PC-9 (cell line): ENCODE measurements at regions of chr12 and their contacts with region 1.

Region 1: GRCh38 chr12:62603061-62603810 is 136.6 kb downstream of the MON2 start:
- DNase-seq: peak; percentile 79 to 82
- H3K4me3 ChIP-seq: peak overlapping the region; percentile 92
- H3K27ac ChIP-seq: peak overlapping the region; percentile 99
- H3K4me1 ChIP-seq: peaks cover 37% of the 10 kb centered on the region
- H3K27me3 ChIP-seq: no peaks in the 10 kb centered on the region
- CTCF ChIP-seq: peak; percentile 34; the same call in 1 of the 2 replicates

Region 2: DNA sequence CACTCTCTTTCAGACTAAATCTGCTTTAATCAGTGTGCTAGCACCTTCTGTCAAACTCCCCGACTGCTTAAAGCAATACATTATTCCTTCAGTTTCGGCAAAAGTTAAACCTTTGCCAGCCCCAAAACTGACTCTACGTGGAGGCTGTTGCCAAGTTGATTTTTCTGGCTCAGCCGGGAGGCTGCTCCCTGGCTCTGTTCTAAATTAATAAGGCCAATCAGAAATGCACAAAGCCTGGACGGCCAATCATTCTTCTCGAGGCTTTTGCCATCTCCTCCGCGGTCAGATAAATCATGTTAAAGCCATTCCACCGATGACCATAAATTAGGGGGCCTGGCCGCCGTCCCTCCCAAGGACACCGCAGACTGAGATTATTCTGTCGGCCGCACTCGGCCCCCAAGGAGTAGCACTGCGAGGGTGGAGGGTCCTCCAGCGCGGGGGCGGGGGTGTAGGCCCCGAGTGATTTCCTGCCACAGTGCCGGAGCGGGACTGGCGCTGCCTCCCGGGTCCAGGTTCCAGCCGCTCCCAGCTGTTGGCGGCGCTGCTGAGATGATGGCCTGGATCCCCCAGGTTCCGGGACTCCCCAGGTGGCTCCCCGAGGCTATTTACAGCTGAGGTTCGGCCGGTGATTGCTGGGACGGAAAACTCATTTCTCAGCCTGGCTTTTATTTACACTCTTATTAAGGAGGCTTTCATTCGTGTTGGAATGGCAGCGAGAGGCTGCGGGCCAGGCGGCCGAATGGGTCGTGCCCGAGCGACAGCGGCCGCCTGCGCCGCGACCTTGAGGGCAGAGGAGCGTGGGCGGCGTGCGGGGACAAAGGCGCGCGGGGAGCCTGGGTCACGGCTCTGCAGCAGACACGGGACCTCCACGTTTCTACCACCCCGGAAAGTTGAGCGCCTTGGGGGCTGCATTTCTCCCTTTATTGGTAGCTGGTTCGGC is 28.5 kb after region 1 on chr12:
- CTCF ChIA-PET with region 1: interaction called, 7 read pairs
- POLR2A ChIA-PET with region 1: no interaction called
- intact Hi-C with region 1: loop called (anchors 2 kb)
- DNase-seq: peak; percentile 57 to 66
- H3K4me3 ChIP-seq: peak overlapping the region; percentile 61
- H3K27ac ChIP-seq: peak overlapping the region; percentile 64
- H3K4me1 ChIP-seq: 0 out of 2 replicates have a peak, but pooled peaks cover 8% of the 10 kb centered on the region
- H3K27me3 ChIP-seq: no peaks in the 10 kb centered on the region
- CTCF ChIP-seq: no peak

Region 3: DNA sequence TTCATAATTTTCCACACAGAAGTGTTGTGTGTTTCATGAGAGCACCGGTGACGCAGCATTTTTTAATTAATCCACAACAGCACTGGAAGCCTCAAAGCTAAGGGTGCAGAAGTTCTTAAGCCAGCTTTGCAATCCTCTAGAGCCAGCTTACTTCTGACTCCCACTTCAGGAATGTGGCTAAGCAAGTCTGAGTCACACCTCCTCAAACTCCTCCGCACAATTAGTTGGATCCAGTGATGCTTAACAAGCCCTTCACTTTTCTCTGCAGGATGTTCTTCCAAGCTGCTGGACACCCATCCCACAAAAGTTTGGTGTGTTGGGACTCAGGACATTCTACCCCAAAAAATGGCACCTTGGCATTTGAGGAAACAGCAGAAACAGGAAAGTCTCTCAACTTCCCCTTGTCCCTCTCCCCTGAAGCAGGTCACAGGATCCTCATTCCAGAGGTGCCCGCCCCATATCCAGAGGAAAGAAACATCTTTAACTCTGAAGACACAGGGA is 121.8 kb after region 1 on chr12:
- CTCF ChIA-PET with region 1: no interaction called
- POLR2A ChIA-PET with region 1: interaction called, 4 read pairs
- intact Hi-C with region 1: loop called (anchors 2 kb)
- DNase-seq: peak; percentile 78 to 99
- H3K4me3 ChIP-seq: peak overlapping the region; percentile 1; the same call in 1 of the 2 replicates
- H3K27ac ChIP-seq: peak overlapping the region; percentile 99
- H3K4me1 ChIP-seq: peaks cover 71% of the 10 kb centered on the region
- H3K27me3 ChIP-seq: no peaks in the 10 kb centered on the region
- CTCF ChIP-seq: no peak

Region 4: GRCh38 chr12:62732861-62733427 is 129.7 kb after region 1 on chr12:
- CTCF ChIA-PET with region 1: no interaction called
- POLR2A ChIA-PET with region 1: no interaction called
- intact Hi-C with region 1: loop called (anchors 1 kb)
- DNase-seq: peak; percentile 41 to 79
- H3K4me3 ChIP-seq: peak overlapping the region; percentile 18; the same call in 1 of the 2 replicates
- H3K27ac ChIP-seq: peak overlapping the region; percentile 96
- H3K4me1 ChIP-seq: peaks cover 86% of the 10 kb centered on the region
- H3K27me3 ChIP-seq: no peaks in the 10 kb centered on the region
- CTCF ChIP-seq: no peak

Region 5: DNA sequence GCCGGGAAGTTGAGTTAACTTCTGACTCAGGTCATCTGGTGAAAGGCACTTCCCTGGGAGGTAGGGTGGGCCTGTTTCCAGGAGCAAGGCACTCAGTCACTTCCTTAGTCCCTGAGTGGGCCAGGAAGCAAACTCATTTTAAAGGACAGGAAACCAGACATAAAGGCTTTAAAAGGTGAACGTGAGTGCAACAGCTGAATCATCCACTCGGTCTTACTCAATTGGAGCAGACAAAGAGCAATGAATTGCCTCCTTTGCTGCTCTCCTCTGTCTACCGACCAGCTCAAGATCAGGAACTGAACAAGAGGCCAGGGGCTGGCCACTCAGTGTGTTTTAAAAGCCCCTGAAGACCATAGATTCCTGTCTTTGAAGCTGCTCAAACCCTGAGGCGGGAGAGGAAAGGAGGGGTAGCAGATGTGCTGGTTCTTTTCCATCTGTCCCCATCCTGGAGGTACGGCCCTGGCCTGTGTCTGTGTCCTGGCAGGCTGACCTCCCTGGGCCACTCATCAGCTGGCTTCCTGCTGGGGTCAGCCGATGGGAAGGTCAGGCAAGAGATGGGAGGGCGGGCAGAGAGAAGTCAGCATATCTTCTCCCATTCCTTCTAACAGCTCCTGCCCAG is 182.8 kb after region 1 on chr12:
- CTCF ChIA-PET with region 1: interaction called, 4 read pairs
- POLR2A ChIA-PET with region 1: no interaction called
- intact Hi-C with region 1: loop called (anchors 2 kb)
- DNase-seq: peak; percentile 70 to 100
- H3K4me3 ChIP-seq: peak overlapping the region; percentile 17; the same call in 1 of the 2 replicates
- H3K27ac ChIP-seq: peak overlapping the region; percentile 98
- H3K4me1 ChIP-seq: peaks cover 55% of the 10 kb centered on the region
- H3K27me3 ChIP-seq: no peaks in the 10 kb centered on the region
- CTCF ChIP-seq: no peak

Region 6: GRCh38 chr12:62793256-62794217 is 190.3 kb after region 1 on chr12:
- CTCF ChIA-PET with region 1: interaction called, 5 read pairs
- POLR2A ChIA-PET with region 1: interaction called, 5 read pairs
- intact Hi-C with region 1: loop called (anchors 1 kb)
- DNase-seq: peak; percentile 80 to 82
- H3K4me3 ChIP-seq: no peak overlapping the region
- H3K27ac ChIP-seq: peak overlapping the region; percentile 76
- H3K4me1 ChIP-seq: peaks cover 21% of the 10 kb centered on the region
- H3K27me3 ChIP-seq: no peaks in the 10 kb centered on the region
- CTCF ChIP-seq: peak; percentile 94

Region 7: DNA sequence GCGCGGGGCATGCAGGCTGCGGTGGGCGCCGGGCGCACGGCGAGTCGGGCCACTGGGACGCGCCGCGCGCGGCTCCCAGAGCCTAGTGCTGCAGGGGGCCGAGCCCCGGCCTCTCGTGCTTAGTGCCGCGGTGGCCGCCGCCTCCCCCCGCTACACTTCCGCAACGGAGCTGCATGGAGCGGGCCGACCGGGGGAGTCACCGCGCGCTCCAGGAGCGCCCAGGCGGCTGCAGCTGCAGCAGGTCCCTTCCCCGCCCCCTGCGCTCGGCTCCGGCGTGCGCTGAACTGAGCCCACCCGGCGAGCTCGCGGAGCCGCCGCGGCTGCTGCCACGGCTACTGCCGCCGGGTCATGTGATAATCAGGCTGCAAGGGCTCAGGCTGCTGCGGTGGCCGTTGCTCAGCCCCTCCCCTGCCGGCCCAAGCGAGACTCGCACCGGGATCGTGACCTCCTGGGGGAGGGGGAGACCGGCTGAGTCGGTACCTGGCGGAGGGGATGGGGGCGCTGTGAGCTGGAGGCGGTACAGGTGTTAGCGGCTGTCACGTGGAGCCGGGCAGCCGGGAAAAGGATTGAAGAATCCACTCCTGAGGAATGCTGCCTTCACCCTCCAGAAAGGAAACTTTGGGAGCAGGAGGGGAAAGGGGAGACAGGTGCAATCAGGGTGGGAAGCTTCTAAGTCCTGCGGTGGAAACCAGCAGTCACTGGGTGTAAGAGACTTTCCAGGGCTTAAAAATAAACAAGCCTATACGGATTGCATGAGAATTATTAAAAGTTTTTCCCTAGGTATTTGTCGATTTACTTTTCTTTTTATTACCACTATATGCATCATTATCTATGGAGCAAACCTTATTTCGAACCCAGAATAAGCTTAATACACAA is 331.8 kb after region 1 on chr12 and contains the start of gene PPM1H:
- CTCF ChIA-PET with region 1: no interaction called
- POLR2A ChIA-PET with region 1: no interaction called
- intact Hi-C with region 1: loop called (anchors 10 kb)
- DNase-seq: peak; percentile 80 to 89
- H3K4me3 ChIP-seq: peak within 1 kb of the TSS; percentile 91
- H3K27ac ChIP-seq: peak within 1 kb of the TSS; percentile 38
- H3K4me1 ChIP-seq: peaks cover 38% of the 10 kb centered on the region
- H3K27me3 ChIP-seq: no peaks in the 10 kb centered on the region
- CTCF ChIP-seq: peak; percentile 77
- total RNA-seq, gene PPM1H: 11.4 and 13.5 TPM in 2 replicates